Dendritic cell treated with granulocyte-macrophage colony-stimulating factor and Interleukin-4, amounts not matched to agents 40 ng/mL and 50 ng/mL, for 4 days (primary cell): ENCODE measurements at regions of chrX and their contacts with region 1.

Region 1: DNA sequence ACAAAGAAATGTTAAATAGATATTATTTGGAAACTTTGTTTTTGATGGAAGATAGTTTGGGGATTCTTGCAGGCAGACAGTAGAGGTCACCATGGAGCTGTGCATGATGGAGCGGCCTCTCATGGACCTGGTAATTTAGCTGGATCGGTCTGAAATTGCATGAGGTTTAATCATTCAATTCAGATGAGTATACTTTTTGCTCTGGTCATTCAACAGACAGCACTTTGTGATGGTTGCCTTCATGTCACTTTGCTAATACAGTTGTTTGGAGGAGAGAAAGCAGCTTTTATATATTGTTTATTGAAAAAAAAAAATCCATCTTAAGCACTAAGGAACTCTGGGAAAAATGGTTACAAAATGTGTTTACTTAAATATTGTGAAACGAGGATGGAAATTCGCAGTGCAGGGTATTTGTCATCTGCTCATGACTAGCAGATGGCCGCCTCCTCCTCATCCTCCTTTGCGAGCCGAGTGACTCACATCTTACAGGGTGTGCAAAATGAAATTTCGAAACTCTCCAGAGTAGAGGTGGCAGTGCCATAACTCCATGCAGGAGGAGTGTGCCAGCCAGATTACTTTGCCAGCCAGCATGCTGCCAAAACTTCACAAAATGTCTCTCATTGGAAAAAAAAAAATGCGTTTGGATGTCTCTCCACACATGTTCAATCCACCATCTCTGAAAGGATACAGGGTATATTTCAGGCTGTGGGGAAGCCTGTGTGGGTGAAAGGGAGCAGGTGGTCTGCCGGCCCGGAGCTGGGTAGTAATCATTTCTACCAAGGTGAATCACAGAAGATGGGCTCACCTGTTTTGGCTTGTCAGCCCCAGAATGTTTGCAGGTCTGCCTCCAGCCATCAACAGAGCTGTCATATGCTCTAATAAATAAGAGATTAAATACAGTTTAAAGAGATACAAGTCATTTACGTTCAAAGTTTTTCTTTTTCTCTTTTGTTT is 314.9 kb upstream of the DIPK2B start:
- H3K4me3 Mint-ChIP-seq: no peak overlapping the region
- H3K27ac Mint-ChIP-seq: no peak overlapping the region
- H3K4me1 Mint-ChIP-seq: peaks cover 12% of the 10 kb centered on the region
- H3K27me3 Mint-ChIP-seq: no peaks in the 10 kb centered on the region

Region 2: DNA sequence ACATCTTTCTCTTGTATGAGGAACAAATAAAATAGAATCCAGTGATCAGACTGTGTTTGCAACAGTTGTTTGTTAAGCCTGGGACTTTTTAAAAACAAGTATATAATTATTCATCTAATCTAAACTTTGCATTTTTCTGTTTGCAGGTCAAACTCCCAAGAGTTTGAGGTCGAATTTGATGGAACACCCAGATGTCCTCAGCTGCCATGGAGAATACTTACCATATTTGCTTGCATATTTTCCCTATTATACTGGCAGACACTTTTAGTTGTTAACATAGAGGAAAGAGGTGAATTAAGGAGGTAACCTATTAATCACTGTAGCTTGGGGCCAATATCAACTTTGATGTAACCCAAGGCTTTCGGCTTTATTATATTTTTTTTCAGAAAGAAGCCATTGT is 86.6 kb after region 1 on chrX:
- intact Hi-C with region 1: no loop called
- H3K4me3 Mint-ChIP-seq: no peak overlapping the region
- H3K27ac Mint-ChIP-seq: no peak overlapping the region
- H3K4me1 Mint-ChIP-seq: peaks cover 7% of the 10 kb centered on the region
- H3K27me3 Mint-ChIP-seq: peaks cover 2% of the 10 kb centered on the region

Region 3: DNA sequence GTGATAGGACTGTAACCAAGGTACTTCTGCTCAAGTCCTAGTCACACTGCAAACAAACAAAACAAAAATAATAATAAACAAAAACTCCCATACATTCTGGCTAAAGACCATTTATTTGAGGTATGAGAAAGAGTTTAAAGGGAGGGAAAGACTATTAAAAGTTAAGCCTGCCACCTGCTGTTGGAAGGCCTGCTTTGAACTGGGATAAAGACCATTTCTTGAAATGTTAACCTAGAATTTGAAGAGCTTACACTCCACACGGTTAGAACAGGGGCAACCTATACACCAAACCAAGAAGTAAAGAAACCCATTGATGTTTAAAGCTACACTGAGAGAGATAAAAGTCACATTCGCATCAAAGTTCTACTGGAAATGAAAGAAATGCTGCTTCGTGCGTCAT is 233.8 kb after region 1 on chrX:
- intact Hi-C with region 1: loop called (anchors 5 kb)
- H3K4me3 Mint-ChIP-seq: no peak overlapping the region
- H3K27ac Mint-ChIP-seq: no peak overlapping the region
- H3K4me1 Mint-ChIP-seq: peaks cover 5% of the 10 kb centered on the region
- H3K27me3 Mint-ChIP-seq: peaks cover 5% of the 10 kb centered on the region

Region 4: GRCh38 chrX:45849253-45849862 is 333.8 kb after region 1 on chrX:
- intact Hi-C with region 1: loop called (anchors 10 kb)
- H3K4me3 Mint-ChIP-seq: no peak overlapping the region
- H3K27ac Mint-ChIP-seq: no peak overlapping the region
- H3K4me1 Mint-ChIP-seq: peaks cover 7% of the 10 kb centered on the region
- H3K27me3 Mint-ChIP-seq: peaks cover 20% of the 10 kb centered on the region

Region 5: GRCh38 chrX:46408553-46409407 is 893.2 kb after region 1 on chrX:
- intact Hi-C with region 1: loop called (anchors 10 kb)
- H3K4me3 Mint-ChIP-seq: no peak overlapping the region
- H3K27ac Mint-ChIP-seq: no peak overlapping the region
- H3K4me1 Mint-ChIP-seq: no peaks in the 10 kb centered on the region
- H3K27me3 Mint-ChIP-seq: no peaks in the 10 kb centered on the region